ENCODE measurements at regions of chr4 and their contacts with region 1.

Region 1: DNA sequence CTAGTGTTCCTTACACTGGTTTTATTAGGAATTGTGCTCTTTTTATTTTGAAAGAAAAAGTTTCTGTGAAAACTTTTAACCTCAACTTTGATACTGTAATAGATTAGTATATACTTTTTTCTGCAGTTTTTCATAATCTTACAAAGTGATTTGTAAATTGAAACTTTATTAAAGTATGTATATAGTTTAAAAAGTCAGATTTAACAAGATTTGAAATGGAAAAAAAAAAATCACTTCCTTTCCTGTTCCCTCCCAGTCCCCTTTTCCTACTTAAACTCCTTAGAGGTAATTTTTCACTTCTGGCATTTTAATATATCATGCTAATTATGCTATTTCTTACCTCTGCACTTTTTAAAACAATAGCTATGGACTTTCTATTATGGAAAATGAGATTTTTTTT is 49.3 kb downstream of the PAQR3 start:
- DNase-seq: no peak
- H3K4me3 Mint-ChIP-seq: no peak overlapping the region
- H3K27ac Mint-ChIP-seq: no peak overlapping the region
- H3K4me1 Mint-ChIP-seq: peaks cover 6% of the 10 kb centered on the region
- H3K27me3 Mint-ChIP-seq: no peaks in the 10 kb centered on the region

Region 2: GRCh38 chr4:78496021-78496643 is 393.8 kb before region 1 on chr4:
- intact Hi-C with region 1: no loop called
- DNase-seq: no peak
- H3K4me3 Mint-ChIP-seq: no peak overlapping the region
- H3K27ac Mint-ChIP-seq: no peak overlapping the region
- H3K4me1 Mint-ChIP-seq: no peaks in the 10 kb centered on the region
- H3K27me3 Mint-ChIP-seq: peaks cover 10% of the 10 kb centered on the region

Region 3: DNA sequence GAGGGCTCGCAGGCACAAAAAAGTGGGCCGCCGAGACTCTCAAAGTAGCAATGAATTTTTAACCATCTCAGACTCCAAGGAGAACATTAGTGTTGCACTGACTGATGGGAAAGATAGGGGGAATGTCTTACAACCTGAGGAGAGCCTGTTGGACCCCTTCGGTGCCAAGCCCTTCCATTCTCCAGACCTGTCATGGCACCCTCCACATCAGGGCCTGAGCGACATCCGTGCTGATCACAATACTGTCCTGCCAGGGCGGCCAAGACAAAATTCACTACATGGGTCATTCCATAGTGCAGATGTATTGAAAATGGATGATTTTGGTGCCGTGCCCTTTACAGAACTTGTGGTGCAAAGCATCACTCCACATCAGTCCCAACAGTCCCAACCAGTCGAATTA is 21.6 kb after region 1 on chr4:
- intact Hi-C with region 1: loop called (anchors 2 kb)
- DNase-seq: no peak
- H3K4me3 Mint-ChIP-seq: no peak overlapping the region
- H3K27ac Mint-ChIP-seq: no peak overlapping the region
- H3K4me1 Mint-ChIP-seq: no peaks in the 10 kb centered on the region
- H3K27me3 Mint-ChIP-seq: no peaks in the 10 kb centered on the region

Measured in activated T-helper 2 cell treated with anti-CD3 and anti-CD28 coated beads, Interferon-gamma antibody, Interleukin-2, Interleukin-4, amounts not matched to agents 10 μg/mL and 5 μg/mL and 100 μg/mL, durations not matched to agents 14 hours and 24 hours and 36 hours (primary cell).